Activated naive CD4-positive, alpha-beta T cell treated with anti-CD3 and anti-CD28 coated beads for 36 hours (primary cell): ENCODE measurements at regions of chr5 and their contacts with region 1.

Region 1: GRCh38 chr5:177133091-177133852 is at the start of gene NSD1:
- DNase-seq: peak; percentile 90
- H3K4me3 Mint-ChIP-seq: peak within 1 kb of the TSS; percentile 88
- H3K27ac Mint-ChIP-seq: peak within 1 kb of the TSS; percentile 88
- H3K4me1 Mint-ChIP-seq: peaks cover 52% of the 10 kb centered on the region
- H3K27me3 Mint-ChIP-seq: no peaks in the 10 kb centered on the region
- total RNA-seq, gene NSD1: 50.2 to 51.7 TPM

Region 2: GRCh38 chr5:177006265-177006972 is 126.9 kb before region 1 on chr5 and contains the start of gene UIMC1:
- CTCF ChIA-PET with region 1: no interaction called
- intact Hi-C with region 1: loop called (anchors 1 kb)
- DNase-seq: peak; percentile 90
- H3K4me3 Mint-ChIP-seq: peak within 1 kb of the TSS; percentile 93
- H3K27ac Mint-ChIP-seq: peak within 1 kb of the TSS; percentile 93
- H3K4me1 Mint-ChIP-seq: peaks cover 29% of the 10 kb centered on the region
- H3K27me3 Mint-ChIP-seq: no peaks in the 10 kb centered on the region
- total RNA-seq, gene UIMC1: 53.4 to 54.6 TPM

Region 3: GRCh38 chr5:177022384-177023308 is 110.6 kb before region 1 on chr5 and contains the start of gene ZNF346:
- CTCF ChIA-PET with region 1: no interaction called
- intact Hi-C with region 1: loop called (anchors 1 kb)
- DNase-seq: peak; percentile 95
- H3K4me3 Mint-ChIP-seq: peak within 1 kb of the TSS; percentile 99
- H3K27ac Mint-ChIP-seq: peak within 1 kb of the TSS; percentile 91
- H3K4me1 Mint-ChIP-seq: peaks cover 39% of the 10 kb centered on the region
- H3K27me3 Mint-ChIP-seq: no peaks in the 10 kb centered on the region
- total RNA-seq, gene ZNF346: 13.4 to 15.1 TPM

Region 4: DNA sequence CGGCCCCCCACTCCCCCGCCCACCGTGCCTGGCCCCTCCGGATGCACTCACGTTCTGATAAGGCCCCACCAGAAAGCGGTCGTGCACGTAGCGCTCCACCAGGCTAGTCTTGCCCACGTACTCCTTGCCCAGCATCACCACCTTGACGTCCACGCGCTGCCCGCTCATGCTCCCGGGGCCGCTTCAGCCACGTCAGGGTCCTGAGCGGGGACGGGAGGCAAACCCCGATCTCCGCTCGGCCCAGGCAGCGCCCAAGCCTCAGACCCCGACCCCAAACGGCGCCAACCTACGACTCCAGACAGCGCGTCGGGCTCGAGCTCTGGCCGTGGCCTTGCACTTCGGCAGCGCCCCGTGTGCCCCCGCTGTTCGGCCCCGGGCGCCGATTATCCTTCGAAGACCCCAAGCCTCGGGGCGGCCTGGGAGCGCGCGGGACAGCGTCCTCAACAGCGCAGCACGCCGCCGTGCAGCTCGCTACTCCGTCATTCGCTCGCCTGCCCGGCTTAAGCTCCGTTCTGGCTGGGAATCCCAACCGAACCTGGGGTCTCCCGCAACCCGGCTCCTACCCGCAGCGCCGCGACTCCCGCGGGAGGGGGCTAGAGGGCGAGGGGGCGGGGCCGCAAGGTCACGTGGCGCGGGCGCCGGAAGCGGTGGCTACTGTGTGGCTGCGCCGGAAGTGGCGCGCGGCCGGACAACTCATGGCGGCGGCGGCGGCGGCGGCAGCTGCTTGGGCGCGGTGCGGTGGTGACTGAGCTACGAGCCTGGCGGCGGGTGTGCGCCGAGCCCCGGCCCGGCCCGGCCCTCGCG is 170.1 kb after region 1 on chr5 and contains the starts of genes PRELID1 and RAB24:
- CTCF ChIA-PET with region 1: no interaction called
- intact Hi-C with region 1: loop called (anchors 1 kb)
- DNase-seq: peak; percentile 89
- H3K4me3 Mint-ChIP-seq: peak within 1 kb of the TSS; percentile 95
- H3K27ac Mint-ChIP-seq: peak within 1 kb of the TSS; percentile 88
- H3K4me1 Mint-ChIP-seq: peaks cover 64% of the 10 kb centered on the region
- H3K27me3 Mint-ChIP-seq: no peaks in the 10 kb centered on the region
- total RNA-seq, gene PRELID1: 253 to 254 TPM
- total RNA-seq, gene RAB24: 10.9 to 13.2 TPM

Region 5: GRCh38 chr5:177357459-177358351 is 224.4 kb after region 1 on chr5 and contains the start of gene RGS14:
- CTCF ChIA-PET with region 1: no interaction called
- intact Hi-C with region 1: loop called (anchors 5 kb)
- DNase-seq: peak; percentile 73
- H3K4me3 Mint-ChIP-seq: peak within 1 kb of the TSS; percentile 88
- H3K27ac Mint-ChIP-seq: peak within 1 kb of the TSS; percentile 87
- H3K4me1 Mint-ChIP-seq: peaks cover 62% of the 10 kb centered on the region
- H3K27me3 Mint-ChIP-seq: no peaks in the 10 kb centered on the region
- total RNA-seq, gene RGS14: 34.6 to 39.2 TPM

Region 6: DNA sequence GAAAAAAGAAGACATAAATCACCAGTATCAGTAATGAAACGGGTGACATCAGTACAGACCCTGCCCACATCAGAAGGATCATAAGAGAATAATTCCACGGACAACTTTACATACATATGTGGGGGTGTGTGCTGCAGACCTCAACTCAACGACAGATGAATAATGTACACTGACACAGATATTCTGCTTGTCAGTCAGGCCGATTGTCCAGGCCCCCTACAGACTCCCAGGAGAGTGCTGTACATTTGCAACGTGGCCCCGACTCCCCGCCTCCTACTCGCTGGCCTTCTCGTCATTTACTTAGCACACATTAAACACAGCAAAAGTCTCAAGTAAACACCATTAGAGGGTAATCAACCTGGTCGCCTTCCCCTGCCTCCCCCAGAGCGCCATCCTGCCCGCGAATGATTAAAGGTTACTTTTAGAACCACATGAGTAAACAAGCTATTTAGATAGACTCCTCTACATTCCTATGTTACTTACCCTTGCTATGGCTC is 455.2 kb after region 1 on chr5:
- CTCF ChIA-PET with region 1: no interaction called
- intact Hi-C with region 1: no loop called
- DNase-seq: no peak
- H3K4me3 Mint-ChIP-seq: no peak overlapping the region
- H3K27ac Mint-ChIP-seq: no peak overlapping the region
- H3K4me1 Mint-ChIP-seq: peaks cover 23% of the 10 kb centered on the region
- H3K27me3 Mint-ChIP-seq: peaks cover 11% of the 10 kb centered on the region